GM12878 (cell line): ENCODE measurements at regions of chr7 and their contacts with region 1.

Region 1: GRCh38 chr7:22110227-22110839 is 164.6 kb upstream of the CDCA7L start:
- DNase-seq: peak; percentile 55
- ATAC-seq: peak; percentile 95
- H3K4me3 ChIP-seq: no peak overlapping the region
- H3K27ac ChIP-seq: no peak overlapping the region
- H3K4me1 ChIP-seq: no peaks in the 10 kb centered on the region
- H3K27me3 ChIP-seq: peaks cover 0 to 2% of the 10 kb centered on the region in 2 experiments; a peak in 1 of 4 replicates
- CTCF ChIP-seq: peak; percentile 76 to 97 (median 90); a peak in 5 of 6 replicates
- EP300 ChIP-seq: no peak
- POLR2A ChIP-seq: no peak
- RAD21 ChIP-seq: peak; percentile 100

Region 2: DNA sequence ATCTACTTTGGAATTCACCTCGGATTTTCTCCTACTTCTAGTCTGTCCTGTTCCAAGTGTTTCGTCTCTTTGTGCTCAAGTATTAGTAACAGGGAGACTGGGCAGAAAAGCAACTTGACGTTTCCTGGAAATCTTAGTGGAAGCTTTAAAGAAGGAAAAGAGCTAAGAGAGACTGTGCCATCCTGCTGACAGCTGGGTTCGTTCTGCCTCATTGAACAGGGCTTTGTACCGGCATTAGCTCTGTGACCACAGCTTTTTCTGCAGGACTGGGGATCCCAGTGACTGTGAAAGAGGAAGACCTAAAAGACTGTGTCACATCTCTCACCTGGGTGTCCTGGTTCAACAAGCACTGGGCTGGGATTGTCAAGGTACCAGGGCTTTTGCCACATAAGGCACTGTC is 93.8 kb before region 1 on chr7:
- CTCF ChIA-PET with region 1: no interaction called
- POLR2A ChIA-PET with region 1: no interaction called
- RAD21 ChIA-PET with region 1: no interaction called
- SMC1A ChIA-PET with region 1: no interaction called
- in situ Hi-C with region 1: no loop called
- intact Hi-C with region 1: no loop called
- DNase-seq: no peak
- ATAC-seq: peak; percentile 70
- H3K4me3 ChIP-seq: no peak overlapping the region
- H3K27ac ChIP-seq: no peak overlapping the region
- H3K4me1 ChIP-seq: no peaks in the 10 kb centered on the region
- H3K27me3 ChIP-seq: 0 out of 4 replicates have a peak, but pooled peaks cover 0 to 2% of the 10 kb centered on the region in 2 experiments
- CTCF ChIP-seq: no peak
- EP300 ChIP-seq: no peak
- POLR2A ChIP-seq: no peak
- RAD21 ChIP-seq: no peak

Region 3: GRCh38 chr7:22082886-22083703 is 27.2 kb before region 1 on chr7:
- CTCF ChIA-PET with region 1: interaction called, 19 read pairs
- POLR2A ChIA-PET with region 1: no interaction called
- RAD21 ChIA-PET with region 1: interaction called, 3 read pairs
- SMC1A ChIA-PET with region 1: interaction called, 6 read pairs
- in situ Hi-C with region 1: no loop called
- intact Hi-C with region 1: no loop called
- DNase-seq: peak; percentile 35
- ATAC-seq: peak; percentile 99
- H3K4me3 ChIP-seq: peak overlapping the region; percentile 64
- H3K27ac ChIP-seq: peak overlapping the region; percentile 42
- H3K4me1 ChIP-seq: peaks cover 6% of the 10 kb centered on the region; the same call in 1 of the 2 replicates
- H3K27me3 ChIP-seq: peaks cover 0 to 2% of the 10 kb centered on the region in 2 experiments; a peak in 2 of 4 replicates
- CTCF ChIP-seq: peak; percentile 94 to 97 (median 97)
- EP300 ChIP-seq: no peak
- POLR2A ChIP-seq: peak; percentile 58; the same call in 1 of the 2 replicates
- RAD21 ChIP-seq: peak; percentile 77

Region 4: GRCh38 chr7:22140578-22140977 is 30.2 kb after region 1 on chr7:
- CTCF ChIA-PET with region 1: interaction called, 16 read pairs
- POLR2A ChIA-PET with region 1: no interaction called
- RAD21 ChIA-PET with region 1: no interaction called
- SMC1A ChIA-PET with region 1: no interaction called
- in situ Hi-C with region 1: no loop called
- intact Hi-C with region 1: no loop called
- DNase-seq: no peak
- ATAC-seq: no peak
- H3K4me3 ChIP-seq: no peak overlapping the region
- H3K27ac ChIP-seq: no peak overlapping the region
- H3K4me1 ChIP-seq: no peaks in the 10 kb centered on the region
- H3K27me3 ChIP-seq: no peaks in the 10 kb centered on the region
- CTCF ChIP-seq: no peak
- EP300 ChIP-seq: no peak
- POLR2A ChIP-seq: no peak
- RAD21 ChIP-seq: no peak

Region 5: DNA sequence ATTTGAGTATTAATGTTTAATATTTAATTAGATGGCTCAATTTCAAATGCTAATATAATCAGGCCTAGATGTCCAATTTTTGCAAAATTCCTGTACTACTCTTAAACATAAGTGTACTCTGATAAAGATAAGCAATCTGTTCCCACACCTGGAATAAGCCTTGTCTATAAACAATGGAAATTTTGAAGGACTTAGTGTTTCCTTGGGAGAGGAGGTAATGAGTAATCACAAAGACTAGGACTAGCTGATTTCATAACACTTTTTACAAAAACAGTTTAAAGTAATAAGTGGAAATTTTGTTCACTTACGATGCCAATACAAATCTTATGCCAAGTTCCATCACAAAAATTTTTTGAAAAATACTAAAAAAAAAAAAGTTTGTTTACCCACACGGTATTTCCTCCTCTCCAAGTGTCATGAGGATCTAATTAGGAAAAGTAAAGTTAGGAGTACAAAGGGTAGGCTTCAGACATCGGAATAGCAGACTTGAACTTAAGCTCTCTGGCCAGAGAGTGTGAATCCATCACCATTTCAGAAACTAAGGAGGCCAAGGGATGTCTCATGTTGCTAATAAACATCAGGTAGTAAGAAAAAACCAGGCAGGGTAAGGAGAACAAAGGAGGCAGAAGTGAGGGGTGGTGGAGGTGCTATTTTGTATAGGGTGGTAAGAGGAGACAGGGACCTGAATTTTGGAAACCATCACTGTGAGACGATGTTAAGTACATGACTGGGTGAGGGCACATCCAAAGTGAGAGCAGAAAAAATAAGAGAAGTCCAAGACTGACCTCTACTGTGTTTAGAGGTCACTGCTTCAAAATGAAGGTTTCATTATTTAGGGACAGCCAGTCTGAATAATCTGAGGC is 185.3 kb after region 1 on chr7:
- CTCF ChIA-PET with region 1: interaction called, 15 read pairs
- POLR2A ChIA-PET with region 1: interaction called, 3 read pairs
- RAD21 ChIA-PET with region 1: no interaction called
- SMC1A ChIA-PET with region 1: interaction called, 9 read pairs
- in situ Hi-C with region 1: no loop called
- intact Hi-C with region 1: loop called (anchors 1 kb)
- DNase-seq: no peak
- ATAC-seq: peak; percentile 52
- H3K4me3 ChIP-seq: no peak overlapping the region
- H3K27ac ChIP-seq: no peak overlapping the region
- H3K4me1 ChIP-seq: no peaks in the 10 kb centered on the region
- H3K27me3 ChIP-seq: no peaks in the 10 kb centered on the region
- CTCF ChIP-seq: peak in 1 of 3 experiments; percentile 33; a peak in 1 of 6 replicates
- EP300 ChIP-seq: no peak
- POLR2A ChIP-seq: no peak
- RAD21 ChIP-seq: 0 out of 2 replicates have a peak, but pooled peaks have one; percentile 8

Region 6: DNA sequence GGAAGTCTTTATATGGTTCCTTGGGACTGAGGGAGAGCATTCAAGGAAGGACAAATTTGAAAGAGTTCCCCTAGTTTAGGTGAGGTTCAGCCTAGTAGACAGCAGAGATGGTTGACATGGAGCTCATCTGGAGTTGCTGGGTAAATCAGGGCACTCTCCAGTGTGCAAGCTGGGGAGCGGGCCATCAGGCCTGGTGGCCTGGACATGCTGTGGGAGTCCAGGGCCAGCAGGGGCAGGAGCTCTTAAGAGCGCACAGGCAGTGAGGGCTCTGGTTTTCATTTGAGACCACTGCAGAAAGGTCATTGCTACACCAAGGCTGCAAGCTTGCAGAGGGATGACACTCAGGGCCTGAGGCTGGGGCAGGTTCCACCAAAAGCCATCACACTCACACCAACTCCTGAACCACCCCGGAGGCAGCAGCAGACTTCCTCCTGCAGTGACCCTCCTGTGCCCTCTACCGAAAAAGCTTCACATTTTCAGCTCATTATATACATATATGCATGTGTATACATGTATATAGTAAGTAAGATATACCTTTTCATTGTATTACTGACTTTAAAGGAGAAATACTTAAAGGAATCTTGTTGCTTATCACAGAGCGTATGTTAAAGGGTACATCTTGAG is 350.1 kb after region 1 on chr7:
- CTCF ChIA-PET with region 1: interaction called, 24 read pairs
- POLR2A ChIA-PET with region 1: no interaction called
- RAD21 ChIA-PET with region 1: interaction called, 10 read pairs
- SMC1A ChIA-PET with region 1: interaction called, 16 read pairs
- in situ Hi-C with region 1: no loop called
- intact Hi-C with region 1: no loop called
- DNase-seq: no peak
- ATAC-seq: peak; percentile 61
- H3K4me3 ChIP-seq: no peak overlapping the region
- H3K27ac ChIP-seq: no peak overlapping the region
- H3K4me1 ChIP-seq: no peaks in the 10 kb centered on the region
- H3K27me3 ChIP-seq: no peaks in the 10 kb centered on the region; a peak in 1 of 4 replicates
- CTCF ChIP-seq: peak in 1 of 3 experiments; percentile 17; a peak in 1 of 6 replicates
- EP300 ChIP-seq: no peak
- POLR2A ChIP-seq: no peak
- RAD21 ChIP-seq: no peak

Region 7: GRCh38 chr7:22481726-22482125 is 371.4 kb after region 1 on chr7:
- CTCF ChIA-PET with region 1: interaction called, 74 read pairs
- POLR2A ChIA-PET with region 1: no interaction called
- RAD21 ChIA-PET with region 1: interaction called, 19 read pairs
- SMC1A ChIA-PET with region 1: interaction called, 13 read pairs
- in situ Hi-C with region 1: loop called (anchors 5 kb)
- intact Hi-C with region 1: no loop called
- DNase-seq: peak; percentile 28
- ATAC-seq: peak; percentile 70
- H3K4me3 ChIP-seq: no peak overlapping the region
- H3K27ac ChIP-seq: no peak overlapping the region
- H3K4me1 ChIP-seq: peaks cover 10% of the 10 kb centered on the region
- H3K27me3 ChIP-seq: no peaks in the 10 kb centered on the region
- CTCF ChIP-seq: no peak
- EP300 ChIP-seq: no peak
- POLR2A ChIP-seq: no peak
- RAD21 ChIP-seq: no peak